Right ventricle myocardium superior (tissue), 1 donor: ENCODE measurements at regions of chr18 and their contacts with region 1.

Region 1: GRCh38 chr18:36321658-36322407 is 24.3 kb downstream of the FHOD3 start:
- DNase-seq: no peak
- ATAC-seq: peak; percentile 25

Region 2: GRCh38 chr18:36229188-36229587 is 92.6 kb before region 1 on chr18:
- intact Hi-C with region 1: no loop called
- DNase-seq: no peak
- ATAC-seq: no peak

Region 3: DNA sequence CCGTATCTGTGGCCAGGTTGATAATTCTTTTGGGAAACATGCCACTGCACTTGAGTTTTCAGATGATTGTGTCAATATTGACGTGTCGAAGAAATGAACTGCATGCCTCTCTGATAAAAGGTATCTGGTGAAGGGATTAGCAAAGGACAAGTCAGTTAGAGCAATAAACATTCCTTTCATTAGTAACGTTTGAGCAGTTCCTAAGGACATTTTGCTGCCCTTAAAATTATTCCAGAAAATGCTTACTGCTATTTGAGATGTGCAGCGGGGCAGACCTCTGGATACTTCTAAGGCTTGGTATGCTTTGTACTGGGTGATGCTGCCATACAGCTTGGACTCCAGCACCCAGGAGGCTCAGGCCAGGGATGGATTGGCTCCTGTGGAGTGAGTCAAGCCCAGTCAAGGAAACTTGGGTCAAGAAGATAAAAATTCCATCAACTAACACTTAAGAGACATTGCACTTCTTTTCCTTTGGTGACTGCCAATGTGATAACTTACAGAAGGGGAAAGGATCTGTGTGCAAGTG is 142.4 kb after region 1 on chr18:
- intact Hi-C with region 1: loop called (anchors 10 kb)
- DNase-seq: no peak
- ATAC-seq: peak; percentile 59

Region 4: GRCh38 chr18:36534154-36534688 is 212.4 kb after region 1 on chr18:
- intact Hi-C with region 1: no loop called
- DNase-seq: no peak
- ATAC-seq: no peak